PC-9 (cell line): ENCODE measurements at regions of chr5 and their contacts with region 1.

Region 1: GRCh38 chr5:90888511-90889324 is 330.1 kb downstream of the ADGRV1 start:
- DNase-seq: peak in 1 of 2 experiments; percentile 77
- H3K4me3 ChIP-seq: no peak overlapping the region
- H3K27ac ChIP-seq: peak overlapping the region; percentile 36; the same call in 1 of the 2 replicates
- H3K4me1 ChIP-seq: peaks cover 21% of the 10 kb centered on the region
- H3K27me3 ChIP-seq: no peaks in the 10 kb centered on the region
- CTCF ChIP-seq: no peak

Region 2: GRCh38 chr5:90916947-90917800 is 28.5 kb after region 1 on chr5:
- CTCF ChIA-PET with region 1: no interaction called
- POLR2A ChIA-PET with region 1: no interaction called
- intact Hi-C with region 1: no loop called
- DNase-seq: peak in 1 of 2 experiments; percentile 35
- H3K4me3 ChIP-seq: no peak overlapping the region
- H3K27ac ChIP-seq: no peak overlapping the region
- H3K4me1 ChIP-seq: no peaks in the 10 kb centered on the region; the same call in 1 of the 2 replicates
- H3K27me3 ChIP-seq: no peaks in the 10 kb centered on the region
- CTCF ChIP-seq: no peak

Region 3: GRCh38 chr5:91403438-91403837 is 514.7 kb after region 1 on chr5:
- CTCF ChIA-PET with region 1: interaction called, 7 read pairs
- POLR2A ChIA-PET with region 1: interaction called, 11 read pairs
- intact Hi-C with region 1: no loop called
- DNase-seq: no peak
- H3K4me3 ChIP-seq: no peak overlapping the region
- H3K27ac ChIP-seq: no peak overlapping the region
- H3K4me1 ChIP-seq: no peaks in the 10 kb centered on the region
- H3K27me3 ChIP-seq: no peaks in the 10 kb centered on the region
- CTCF ChIP-seq: no peak